Common myeloid progenitor, CD34-positive (primary cell): ENCODE measurements at regions of chr5 and their contacts with region 1.

Region 1: DNA sequence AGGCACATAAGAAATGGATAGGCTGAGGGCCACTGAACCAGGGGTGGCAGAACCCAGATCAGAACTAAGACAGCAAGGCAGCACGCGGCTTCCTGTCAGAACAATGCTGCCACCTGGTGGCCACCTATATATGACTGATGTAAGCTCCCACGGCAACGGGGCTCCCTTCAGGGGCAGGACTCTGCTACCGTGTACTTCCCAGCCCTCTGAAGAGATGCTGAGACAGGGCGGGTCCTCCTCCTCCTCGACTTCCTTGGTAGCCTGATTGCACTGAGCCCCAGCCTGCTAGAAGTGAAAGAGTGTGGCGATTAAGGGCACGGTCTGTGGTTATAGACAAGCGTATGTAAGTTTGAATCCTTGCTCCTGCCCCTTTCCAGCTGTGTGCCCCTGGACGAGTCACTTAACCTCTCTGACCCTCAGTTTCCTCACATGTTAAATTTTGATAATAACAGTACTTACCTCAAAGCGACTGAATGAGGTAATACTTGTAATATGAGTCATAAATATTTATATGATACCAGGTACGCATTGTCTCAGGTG is 13.3 kb downstream of the RPS14 start:
- DNase-seq: peak; percentile 88 to 95 (median 93)
- H3K4me3 ChIP-seq: no peak overlapping the region
- H3K27ac ChIP-seq: no peak overlapping the region
- H3K4me1 ChIP-seq: peaks cover 0 to 6% (median 3%) of the 10 kb centered on the region in 4 experiments
- H3K27me3 ChIP-seq: no peaks in the 10 kb centered on the region

Region 2: GRCh38 chr5:150343994-150344393 is 92.2 kb before region 1 on chr5:
- CTCF ChIA-PET with region 1: no interaction called
- POLR2A ChIA-PET with region 1: no interaction called
- DNase-seq: no peak
- H3K4me3 ChIP-seq: no peak overlapping the region
- H3K27ac ChIP-seq: no peak overlapping the region
- H3K4me1 ChIP-seq: peaks cover 0 to 11% (median 7%) of the 10 kb centered on the region in 4 experiments
- H3K27me3 ChIP-seq: no peaks in the 10 kb centered on the region

Region 3: DNA sequence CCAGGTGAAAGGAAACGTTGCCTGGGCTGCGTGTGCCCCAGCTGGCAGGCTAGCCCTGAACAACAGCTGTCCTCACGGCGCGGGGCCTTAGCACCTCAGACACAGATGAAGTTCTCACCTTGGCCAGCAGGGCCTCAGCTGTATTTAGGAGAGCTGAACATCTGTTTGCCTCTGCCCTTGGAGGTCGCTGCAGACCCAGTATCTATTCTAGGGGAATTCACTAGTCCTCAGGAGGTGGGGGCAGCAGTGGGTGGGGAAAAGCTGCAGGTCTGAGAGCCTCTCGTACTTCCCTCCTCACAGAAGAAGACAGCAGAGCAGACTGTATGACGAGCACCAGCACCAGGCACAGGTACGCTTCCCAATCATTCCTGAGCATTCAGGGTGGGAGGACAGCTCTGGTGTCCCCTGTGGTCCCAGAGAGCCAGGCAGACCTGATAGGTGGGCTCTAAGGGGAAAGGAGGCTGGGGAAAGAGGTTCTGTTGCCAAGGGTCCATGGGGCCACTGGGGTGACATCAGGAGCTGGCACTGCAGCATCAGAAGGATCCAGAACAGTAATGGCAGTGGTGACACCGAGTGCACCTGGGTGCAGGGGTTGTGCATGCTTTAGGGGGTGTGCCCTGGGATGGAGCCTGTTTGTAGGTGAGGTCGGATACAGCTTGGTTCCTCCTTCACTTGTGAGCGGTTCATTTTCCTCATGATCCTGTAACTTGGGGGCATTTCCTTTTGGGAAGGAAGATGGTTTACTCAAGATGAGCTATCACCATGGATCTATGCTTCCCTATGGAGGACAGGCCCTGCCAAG is 37.3 kb before region 1 on chr5:
- CTCF ChIA-PET with region 1: interaction called, 165 read pairs
- POLR2A ChIA-PET with region 1: interaction called, 9 read pairs
- DNase-seq: peak; percentile 60 to 91 (median 88)
- H3K4me3 ChIP-seq: no peak overlapping the region
- H3K27ac ChIP-seq: no peak overlapping the region
- H3K4me1 ChIP-seq: peaks cover 0 to 15% (median 8%) of the 10 kb centered on the region in 4 experiments
- H3K27me3 ChIP-seq: no peaks in the 10 kb centered on the region

Region 4: DNA sequence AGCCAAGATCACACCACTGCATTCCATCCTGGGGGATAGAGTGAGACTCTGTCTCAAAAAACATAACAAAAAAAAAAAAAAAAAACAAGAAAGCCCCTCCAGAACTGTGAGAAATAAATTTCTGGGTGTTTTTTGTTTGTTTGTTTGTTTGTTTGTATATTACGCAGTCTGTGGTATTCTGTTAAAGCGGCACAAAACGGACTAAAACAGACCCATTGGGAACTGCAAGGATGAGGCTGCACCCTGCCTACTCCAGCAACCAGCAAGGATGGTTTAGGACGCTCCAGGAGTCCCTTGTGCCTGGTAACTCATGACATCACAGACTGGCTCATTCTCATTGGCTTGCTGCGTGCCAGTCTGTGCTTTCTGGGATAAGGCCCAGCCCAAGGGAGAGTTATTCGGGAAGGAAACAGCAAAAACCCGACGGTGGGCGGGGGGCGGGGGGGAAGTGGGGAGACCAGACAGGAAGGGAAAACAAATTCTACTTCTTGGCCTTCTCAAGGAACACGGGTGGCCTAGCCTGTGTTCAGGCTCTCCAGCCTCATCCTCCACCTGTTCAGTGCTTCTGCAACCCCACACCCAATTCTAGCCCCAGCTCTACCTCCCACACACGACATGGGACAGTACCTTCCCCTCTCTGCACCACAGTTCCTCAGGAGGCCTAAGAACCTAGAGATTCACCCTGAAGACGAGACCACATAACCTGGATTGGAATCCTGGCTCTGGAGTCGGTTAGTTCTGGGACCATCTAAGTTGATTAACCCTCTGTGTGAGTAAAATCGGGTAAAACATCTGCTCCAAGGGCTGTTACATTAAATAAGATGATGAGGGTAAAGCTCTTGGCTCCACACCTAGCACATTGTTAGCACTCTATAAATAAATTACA is 26.3 kb before region 1 on chr5:
- CTCF ChIA-PET with region 1: interaction called, 33 read pairs
- POLR2A ChIA-PET with region 1: interaction called, 4 read pairs
- DNase-seq: peak; percentile 74 to 78 (median 74)
- H3K4me3 ChIP-seq: peak overlapping the region; percentile 30 to 100 (median 94)
- H3K27ac ChIP-seq: peak overlapping the region; percentile 97
- H3K4me1 ChIP-seq: peaks cover 12 to 61% (median 37%) of the 10 kb centered on the region in 4 experiments
- H3K27me3 ChIP-seq: no peaks in the 10 kb centered on the region

Region 5: DNA sequence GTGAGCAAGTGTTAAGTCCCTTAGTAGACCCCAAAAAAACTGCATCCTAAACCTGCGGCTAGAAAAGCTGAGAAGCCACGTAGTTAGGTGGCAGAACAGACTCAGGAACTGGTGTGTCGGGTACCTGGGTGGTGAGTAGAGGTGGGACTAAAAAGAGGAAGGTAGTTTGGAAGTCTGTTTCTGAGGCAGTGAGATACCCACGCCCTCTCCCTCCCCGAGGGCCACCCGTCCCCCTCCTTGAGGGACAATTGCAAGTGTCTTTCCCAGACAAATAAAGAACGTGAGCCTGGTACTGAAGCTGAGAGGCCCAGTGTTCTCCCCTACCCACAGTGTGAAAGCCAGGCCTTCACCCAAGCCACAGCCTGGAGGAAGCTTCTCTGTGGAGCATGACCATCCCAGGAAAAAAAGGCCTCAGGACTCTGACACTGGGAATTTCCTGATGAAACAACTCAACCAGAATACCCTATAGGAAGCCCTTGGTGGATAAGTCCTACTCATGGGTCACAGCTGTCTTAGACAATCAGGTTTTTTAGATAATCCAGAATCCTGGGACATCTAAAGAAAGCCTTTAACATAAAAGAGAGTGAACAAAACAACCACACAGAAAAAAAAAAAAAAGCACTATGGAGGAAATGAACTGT is 16.5 kb before region 1 on chr5:
- CTCF ChIA-PET with region 1: interaction called, 10 read pairs
- POLR2A ChIA-PET with region 1: interaction called, 5 read pairs
- DNase-seq: peak in 2 of 3 donors; percentile 77 to 82
- H3K4me3 ChIP-seq: peak overlapping the region in 2 of 7 experiments; percentile 28 to 30
- H3K27ac ChIP-seq: peak overlapping the region in 1 of 2 experiments; percentile 52
- H3K4me1 ChIP-seq: peaks cover 3 to 15% (median 10%) of the 10 kb centered on the region in 4 experiments
- H3K27me3 ChIP-seq: no peaks in the 10 kb centered on the region

Region 6: DNA sequence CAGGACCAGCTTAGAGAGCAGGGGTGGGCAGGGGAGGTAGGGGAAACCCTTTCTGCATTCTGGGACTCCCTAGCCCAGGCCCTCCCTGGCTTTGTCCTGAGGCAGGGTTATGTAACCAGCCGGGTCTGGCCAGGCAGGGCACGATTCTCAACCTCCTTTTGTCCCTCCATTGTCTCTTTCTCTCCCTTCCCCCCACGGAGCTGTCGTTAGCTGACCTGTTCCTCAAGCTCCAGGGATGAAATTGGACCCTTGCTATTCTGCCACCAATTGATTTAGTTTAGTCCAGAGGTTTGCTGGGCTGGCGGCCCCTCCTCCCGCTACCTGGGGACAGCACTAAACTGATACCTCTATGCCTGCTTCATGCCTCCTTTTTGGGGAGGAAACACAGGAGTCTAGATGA is 62.3 kb after region 1 on chr5:
- CTCF ChIA-PET with region 1: no interaction called
- POLR2A ChIA-PET with region 1: no interaction called
- DNase-seq: no peak
- H3K4me3 ChIP-seq: no peak overlapping the region
- H3K27ac ChIP-seq: no peak overlapping the region
- H3K4me1 ChIP-seq: peaks cover 0 to 7% (median 2%) of the 10 kb centered on the region in 4 experiments
- H3K27me3 ChIP-seq: no peaks in the 10 kb centered on the region